ENCODE measurements at regions of chr15 and their contacts with region 1.

Region 1: GRCh38 chr15:71443538-71443937 is 328.3 kb downstream of the THSD4 start:
- DNase-seq: no peak
- H3K4me3 ChIP-seq: no peak overlapping the region
- CTCF ChIP-seq: peak; percentile 70

Region 2: GRCh38 chr15:70974004-70974832 is 469.3 kb before region 1 on chr15:
- CTCF ChIA-PET with region 1: interaction called, 36 read pairs
- POLR2A ChIA-PET with region 1: no interaction called
- DNase-seq: peak; percentile 49
- H3K4me3 ChIP-seq: no peak overlapping the region
- CTCF ChIP-seq: peak; percentile 20

Region 3: DNA sequence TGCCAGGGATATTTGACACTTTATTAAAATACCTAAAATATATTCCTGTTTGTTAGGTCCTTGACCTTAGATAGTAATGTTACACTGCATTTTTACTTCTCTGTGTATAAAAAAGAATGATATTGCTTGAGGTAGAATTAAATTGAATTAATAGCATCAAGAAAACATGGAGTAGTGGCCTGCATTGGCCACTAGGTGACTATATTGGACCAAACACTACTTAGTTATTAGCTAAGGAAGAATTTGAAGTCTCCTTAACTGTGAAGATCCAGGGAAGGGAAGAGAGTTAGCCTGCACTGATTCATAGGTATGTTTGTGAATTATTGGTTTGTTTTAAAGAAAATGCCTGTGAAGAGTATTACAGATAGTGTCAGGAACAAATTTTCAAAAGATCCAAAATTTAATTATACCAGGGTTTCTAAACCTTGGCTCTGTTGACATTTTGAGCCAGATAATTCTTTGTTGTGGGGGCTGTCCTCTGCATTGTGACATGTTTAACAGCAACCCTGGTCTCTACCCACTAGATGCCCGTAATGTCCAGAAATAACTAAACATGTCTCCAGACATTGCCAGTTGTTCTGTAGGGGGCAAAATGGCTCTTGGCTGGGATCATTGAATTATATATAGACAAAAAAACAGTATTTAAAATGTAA is 431.9 kb before region 1 on chr15:
- CTCF ChIA-PET with region 1: interaction called, 33 read pairs
- POLR2A ChIA-PET with region 1: no interaction called
- DNase-seq: peak; percentile 41
- H3K4me3 ChIP-seq: no peak overlapping the region
- CTCF ChIP-seq: peak; percentile 54

Region 4: GRCh38 chr15:71043361-71043760 is 400.2 kb before region 1 on chr15:
- CTCF ChIA-PET with region 1: no interaction called
- POLR2A ChIA-PET with region 1: no interaction called
- DNase-seq: no peak
- H3K4me3 ChIP-seq: no peak overlapping the region
- CTCF ChIP-seq: no peak

Region 5: GRCh38 chr15:71114896-71115554 is 328.5 kb before region 1 on chr15 and contains the start of gene THSD4:
- CTCF ChIA-PET with region 1: interaction called, 197 read pairs
- POLR2A ChIA-PET with region 1: interaction called, 3 read pairs
- DNase-seq: no peak
- H3K4me3 ChIP-seq: peak within 1 kb of the TSS; percentile 64
- CTCF ChIP-seq: peak; percentile 98

Region 6: DNA sequence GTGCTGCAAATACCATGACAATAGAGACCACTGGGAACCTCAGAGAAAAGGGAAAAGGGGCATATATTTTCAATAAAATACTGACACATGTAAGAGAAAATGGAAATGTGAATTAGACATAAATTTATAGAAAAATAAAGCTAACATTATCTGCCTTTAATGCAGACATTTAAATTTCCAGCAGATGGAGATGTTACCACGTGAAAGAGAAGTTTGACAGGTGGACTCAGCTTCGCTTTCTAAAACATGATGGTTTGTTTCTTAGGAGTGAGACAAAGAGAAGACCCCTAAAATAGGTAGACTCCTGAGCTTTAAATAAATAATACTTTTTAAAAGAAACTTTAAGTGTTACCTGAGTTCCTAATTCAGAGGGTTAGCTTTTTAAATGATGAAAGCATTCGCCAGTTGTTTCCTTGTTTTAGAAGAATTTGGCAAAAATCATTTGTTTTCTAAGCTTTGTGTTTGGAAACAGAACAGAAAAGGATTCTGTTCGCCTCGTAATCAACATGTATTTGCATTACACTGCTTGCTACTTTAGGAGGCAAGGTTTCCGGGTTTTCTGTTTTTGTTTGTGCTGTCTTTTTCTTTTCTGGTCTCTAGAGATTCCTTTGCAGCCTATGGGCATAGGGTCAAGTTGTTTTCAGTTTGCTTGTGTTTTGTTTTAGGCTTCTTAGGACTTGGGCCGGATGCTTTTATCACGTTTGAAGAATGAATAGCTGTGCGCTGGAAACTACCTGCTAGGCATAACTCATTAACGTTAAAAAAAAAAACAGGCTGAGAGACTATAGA is 56.9 kb before region 1 on chr15:
- CTCF ChIA-PET with region 1: interaction called, 97 read pairs
- POLR2A ChIA-PET with region 1: no interaction called
- DNase-seq: no peak
- H3K4me3 ChIP-seq: no peak overlapping the region
- CTCF ChIP-seq: peak; percentile 0

Region 7: DNA sequence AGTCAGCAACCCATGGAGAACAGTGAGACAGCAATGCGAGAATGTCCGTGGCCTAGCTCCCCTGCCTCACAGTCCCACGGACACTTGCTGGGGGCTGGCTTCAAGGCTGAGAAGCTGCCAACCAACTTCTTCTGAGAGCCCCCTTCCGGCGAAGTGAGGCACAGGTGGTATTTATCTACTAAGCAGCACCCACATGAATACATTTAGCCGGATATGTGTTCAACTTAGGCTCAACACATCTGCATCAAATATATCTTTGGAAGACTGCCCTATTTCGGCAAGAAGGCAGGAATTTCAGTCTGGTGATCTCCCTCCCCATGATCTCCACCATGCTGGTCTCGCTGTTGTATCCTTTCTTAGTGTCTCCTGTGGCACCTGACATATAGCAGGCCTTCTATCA is 25.9 kb after region 1 on chr15:
- CTCF ChIA-PET with region 1: interaction called, 11 read pairs
- POLR2A ChIA-PET with region 1: no interaction called
- DNase-seq: no peak
- H3K4me3 ChIP-seq: no peak overlapping the region
- CTCF ChIP-seq: peak; percentile 22

Region 8: DNA sequence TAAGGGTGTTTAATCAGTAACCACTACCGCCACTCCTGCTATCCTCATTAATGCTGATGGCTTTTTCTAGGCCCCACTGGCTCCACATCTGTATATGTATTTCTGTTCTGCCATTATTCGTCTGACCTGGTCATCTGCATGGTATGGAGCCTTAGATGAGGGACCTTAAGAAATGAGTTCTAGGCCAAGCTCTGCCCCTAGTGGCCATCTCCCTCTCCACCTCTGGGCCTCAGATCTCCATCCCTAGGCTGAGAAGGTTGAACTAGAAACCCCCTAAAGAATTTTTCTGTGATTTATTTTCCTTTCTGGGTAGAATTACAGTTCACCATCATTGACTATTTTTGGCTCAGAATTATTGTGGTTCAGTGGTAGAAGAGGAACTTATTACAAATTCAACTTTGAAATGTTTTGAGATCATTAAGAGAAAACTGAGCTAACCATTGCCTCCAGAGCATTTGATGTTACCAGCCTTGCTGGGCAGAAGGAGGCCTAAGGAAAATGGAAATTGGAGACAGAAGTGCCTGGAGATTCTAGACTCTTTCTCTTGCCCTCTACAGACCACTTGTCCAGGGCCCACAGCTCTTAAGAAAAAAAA is 41.7 kb after region 1 on chr15:
- CTCF ChIA-PET with region 1: no interaction called
- POLR2A ChIA-PET with region 1: no interaction called
- DNase-seq: no peak
- H3K4me3 ChIP-seq: no peak overlapping the region
- CTCF ChIP-seq: peak; percentile 19

Region 9: DNA sequence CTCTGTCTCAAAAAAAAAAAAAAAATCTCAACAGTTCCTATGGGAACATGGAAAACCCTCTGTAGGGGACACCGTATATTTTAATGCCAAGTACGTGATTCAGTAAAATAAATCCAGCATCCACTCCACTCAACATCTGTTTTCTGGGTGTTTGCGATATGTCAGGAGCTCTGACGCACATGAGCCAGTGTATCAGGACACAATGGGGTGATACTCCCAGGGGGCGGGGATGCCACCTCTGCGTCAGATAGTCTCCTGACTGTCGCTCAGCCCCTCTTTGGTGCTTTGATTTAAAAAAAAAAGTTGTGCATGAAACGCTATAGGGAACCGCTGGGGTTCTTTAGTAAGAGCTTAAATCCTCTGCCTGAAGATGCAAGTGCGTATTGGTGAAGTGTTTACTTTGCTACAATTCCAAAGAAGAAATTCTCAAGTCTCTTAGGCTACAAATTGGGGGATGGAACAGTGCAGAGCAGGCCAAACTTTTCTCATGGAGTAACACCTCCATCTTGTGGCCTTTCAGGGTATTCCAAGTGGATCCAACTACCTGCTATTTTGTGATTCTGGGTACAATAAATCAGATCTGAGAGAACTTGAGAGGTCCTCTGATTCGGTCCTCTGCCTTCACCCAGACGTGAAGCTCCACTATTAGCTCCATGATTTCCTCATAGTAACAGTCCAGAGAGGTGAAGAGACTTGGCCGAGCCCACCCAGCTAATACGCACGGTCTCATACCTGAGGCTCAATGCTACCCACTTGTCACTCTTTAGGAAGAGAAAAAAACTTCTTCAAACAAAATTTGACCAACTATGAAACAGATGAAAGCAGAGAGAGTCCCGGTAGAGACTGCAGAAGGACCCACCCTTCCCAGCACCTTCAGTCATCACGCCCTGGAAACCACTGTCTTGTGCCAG is 357.6 kb after region 1 on chr15:
- CTCF ChIA-PET with region 1: interaction called, 38 read pairs
- POLR2A ChIA-PET with region 1: no interaction called
- DNase-seq: peak; percentile 73
- H3K4me3 ChIP-seq: no peak overlapping the region
- CTCF ChIP-seq: peak; percentile 64

Measured in AG04449 (cell line).